ENCODE measurements at regions of chr4 and their contacts with region 1.

Region 1: GRCh38 chr4:85968945-85969819 is 390.7 kb downstream of the MAPK10 start:
- DNase-seq: peak; percentile 36
- H3K4me3 ChIP-seq: no peak overlapping the region
- H3K27ac ChIP-seq: no peak overlapping the region
- H3K4me1 ChIP-seq: no peaks in the 10 kb centered on the region
- H3K27me3 ChIP-seq: no peaks in the 10 kb centered on the region
- CTCF ChIP-seq: peak; percentile 31 to 66

Region 2: GRCh38 chr4:84938316-84938715 is 1030.9 kb before region 1 on chr4:
- CTCF ChIA-PET with region 1: no interaction called
- dilution Hi-C with region 1: no loop called
- in situ Hi-C with region 1: no loop called
- intact Hi-C with region 1: no loop called
- DNase-seq: peak; percentile 33
- H3K4me3 ChIP-seq: peak overlapping the region in 1 of 3 experiments; percentile 4
- H3K27ac ChIP-seq: peak overlapping the region; percentile 67
- H3K4me1 ChIP-seq: peaks cover 13% of the 10 kb centered on the region
- H3K27me3 ChIP-seq: no peaks in the 10 kb centered on the region
- CTCF ChIP-seq: no peak

Region 3: GRCh38 chr4:85084380-85085094 is 884.6 kb before region 1 on chr4:
- CTCF ChIA-PET with region 1: no interaction called
- dilution Hi-C with region 1: no loop called
- in situ Hi-C with region 1: no loop called
- intact Hi-C with region 1: loop called (anchors 10 kb)
- DNase-seq: peak; percentile 56
- H3K4me3 ChIP-seq: no peak overlapping the region
- H3K27ac ChIP-seq: no peak overlapping the region
- H3K4me1 ChIP-seq: no peaks in the 10 kb centered on the region
- H3K27me3 ChIP-seq: peaks cover 5% of the 10 kb centered on the region
- CTCF ChIP-seq: peak; percentile 59 to 73

Region 4: GRCh38 chr4:85147439-85148076 is 821.6 kb before region 1 on chr4:
- CTCF ChIA-PET with region 1: no interaction called
- dilution Hi-C with region 1: no loop called
- in situ Hi-C with region 1: no loop called
- intact Hi-C with region 1: loop called (anchors 10 kb)
- DNase-seq: peak; percentile 41
- H3K4me3 ChIP-seq: no peak overlapping the region
- H3K27ac ChIP-seq: no peak overlapping the region
- H3K4me1 ChIP-seq: peaks cover 3% of the 10 kb centered on the region
- H3K27me3 ChIP-seq: no peaks in the 10 kb centered on the region
- CTCF ChIP-seq: peak; percentile 47 to 61

Region 5: GRCh38 chr4:85257817-85258370 is 711.3 kb before region 1 on chr4:
- CTCF ChIA-PET with region 1: no interaction called
- dilution Hi-C with region 1: no loop called
- in situ Hi-C with region 1: no loop called
- intact Hi-C with region 1: no loop called
- DNase-seq: no peak
- H3K4me3 ChIP-seq: no peak overlapping the region
- H3K27ac ChIP-seq: no peak overlapping the region
- H3K4me1 ChIP-seq: no peaks in the 10 kb centered on the region
- H3K27me3 ChIP-seq: peaks cover 3% of the 10 kb centered on the region
- CTCF ChIP-seq: no peak

Region 6: GRCh38 chr4:85756938-85757337 is 212.2 kb before region 1 on chr4:
- CTCF ChIA-PET with region 1: no interaction called
- dilution Hi-C with region 1: no loop called
- in situ Hi-C with region 1: loop called (anchors 25 kb)
- intact Hi-C with region 1: loop called (anchors 1 kb)
- DNase-seq: no peak
- H3K4me3 ChIP-seq: no peak overlapping the region
- H3K27ac ChIP-seq: no peak overlapping the region
- H3K4me1 ChIP-seq: no peaks in the 10 kb centered on the region
- H3K27me3 ChIP-seq: no peaks in the 10 kb centered on the region
- CTCF ChIP-seq: peak; percentile 40 to 58

Region 7: GRCh38 chr4:85787138-85787537 is 182.0 kb before region 1 on chr4:
- CTCF ChIA-PET with region 1: no interaction called
- dilution Hi-C with region 1: no loop called
- in situ Hi-C with region 1: no loop called
- intact Hi-C with region 1: no loop called
- DNase-seq: peak; percentile 60
- H3K4me3 ChIP-seq: no peak overlapping the region
- H3K27ac ChIP-seq: no peak overlapping the region
- H3K4me1 ChIP-seq: peaks cover 6% of the 10 kb centered on the region
- H3K27me3 ChIP-seq: no peaks in the 10 kb centered on the region
- CTCF ChIP-seq: no peak

Region 8: DNA sequence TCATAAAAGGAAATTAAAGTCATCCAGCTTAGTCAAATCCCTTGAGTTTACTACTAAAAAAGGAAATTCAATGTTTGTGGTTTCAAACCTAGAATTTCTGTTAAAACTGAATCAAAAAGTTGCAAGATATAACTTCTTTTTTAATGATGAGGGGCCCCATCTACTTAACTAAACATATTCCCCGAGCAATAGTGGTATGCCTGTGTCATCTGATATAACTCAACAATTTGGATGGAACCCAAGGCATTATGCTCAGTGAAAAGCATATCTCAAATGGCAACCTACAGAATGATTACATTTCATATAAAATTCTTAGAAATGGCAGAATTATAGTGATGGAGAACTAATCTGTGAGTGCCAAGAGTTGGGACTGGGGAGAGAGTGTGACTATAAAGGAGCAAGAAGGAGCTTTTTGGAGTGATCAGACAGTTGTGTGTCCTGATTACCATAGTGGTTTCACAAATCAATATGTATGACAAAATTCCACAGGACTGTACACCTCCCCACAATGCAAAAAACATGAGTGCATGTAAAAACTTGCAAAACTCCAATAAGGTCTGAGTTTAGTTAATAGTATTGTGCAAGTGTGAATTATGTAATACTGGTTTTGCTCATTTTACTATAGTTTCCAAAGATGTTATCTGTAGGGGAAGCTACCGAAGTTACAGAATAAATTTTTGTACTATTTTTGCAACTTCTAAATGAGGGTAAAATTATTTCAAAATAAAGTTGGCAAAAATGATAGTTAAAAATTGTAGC is 171.0 kb before region 1 on chr4:
- CTCF ChIA-PET with region 1: interaction called, 5 read pairs
- dilution Hi-C with region 1: no loop called
- in situ Hi-C with region 1: no loop called
- intact Hi-C with region 1: loop called (anchors 1 kb)
- DNase-seq: peak; percentile 53
- H3K4me3 ChIP-seq: no peak overlapping the region
- H3K27ac ChIP-seq: no peak overlapping the region
- H3K4me1 ChIP-seq: peaks cover 6% of the 10 kb centered on the region
- H3K27me3 ChIP-seq: no peaks in the 10 kb centered on the region
- CTCF ChIP-seq: no peak

Region 9: DNA sequence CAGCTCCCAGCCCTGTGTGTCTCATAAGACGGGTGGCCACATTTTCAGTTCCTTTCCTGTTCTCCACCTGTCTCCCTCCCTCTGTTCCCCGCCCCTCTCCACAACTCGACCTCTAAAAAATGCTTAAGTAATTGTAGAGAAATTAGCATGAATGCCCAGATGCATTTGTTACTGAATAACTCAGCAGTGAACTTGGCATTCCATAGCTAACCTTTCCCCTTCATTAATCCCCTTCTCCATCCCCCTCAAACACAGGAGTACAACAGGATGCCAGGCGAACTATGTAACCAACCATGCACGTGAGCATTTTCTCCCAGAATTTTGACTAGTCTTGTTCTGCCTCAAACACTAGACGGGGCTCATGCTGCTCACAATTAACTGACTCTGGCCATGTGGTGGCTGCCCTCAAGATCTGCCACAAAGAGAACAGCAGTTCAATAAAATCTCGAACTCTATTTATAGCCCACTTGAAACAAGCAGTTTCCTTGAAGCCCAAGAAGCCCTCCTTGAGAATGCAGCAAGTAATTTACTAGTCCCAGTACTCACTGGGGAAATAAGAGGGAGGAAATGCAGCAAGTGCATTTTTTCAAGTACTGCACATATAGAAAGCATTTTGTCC is 143.0 kb before region 1 on chr4:
- CTCF ChIA-PET with region 1: interaction called, 3 read pairs
- dilution Hi-C with region 1: no loop called
- in situ Hi-C with region 1: no loop called
- intact Hi-C with region 1: loop called (anchors 10 kb)
- DNase-seq: no peak
- H3K4me3 ChIP-seq: no peak overlapping the region
- H3K27ac ChIP-seq: no peak overlapping the region
- H3K4me1 ChIP-seq: peaks cover 12% of the 10 kb centered on the region
- H3K27me3 ChIP-seq: peaks cover 2% of the 10 kb centered on the region
- CTCF ChIP-seq: no peak

Region 10: DNA sequence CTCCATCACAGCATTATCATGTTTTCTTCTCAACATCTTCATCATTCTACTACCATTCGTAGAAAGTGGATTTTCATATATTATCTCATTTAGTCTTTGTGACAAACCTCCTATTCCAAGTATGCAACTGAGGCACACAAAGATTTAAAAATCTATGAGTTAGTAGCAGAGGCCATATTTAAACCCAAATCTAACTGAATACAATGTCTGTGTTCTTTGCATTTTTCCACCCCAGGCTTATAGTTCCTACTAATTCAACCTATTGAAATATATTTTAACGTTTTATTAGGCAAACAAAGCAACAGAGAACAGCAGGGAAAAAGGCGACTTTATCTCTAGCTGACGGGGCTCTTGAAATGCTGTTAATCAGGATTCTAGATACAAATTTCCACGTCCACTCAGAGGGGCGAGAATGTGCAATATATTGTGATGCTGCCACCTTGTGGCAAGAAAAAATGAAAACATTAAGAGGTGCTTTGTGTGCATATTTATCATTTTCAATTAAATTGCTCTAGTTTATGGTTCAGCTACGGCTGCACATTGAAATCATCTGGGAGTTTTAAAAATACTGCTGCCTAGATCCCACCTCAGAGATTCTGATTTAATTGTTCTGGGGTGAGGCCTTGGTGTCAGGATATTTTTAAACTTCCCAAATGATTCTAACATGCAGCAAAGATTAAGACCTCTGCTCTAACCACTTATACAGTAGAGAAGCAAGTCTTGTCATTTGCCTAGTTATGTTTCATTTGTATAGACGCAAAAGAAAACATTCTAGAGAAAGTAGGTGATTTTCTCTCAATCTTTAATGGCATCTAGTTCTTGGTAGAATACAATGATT is 74.8 kb after region 1 on chr4:
- CTCF ChIA-PET with region 1: no interaction called
- dilution Hi-C with region 1: no loop called
- in situ Hi-C with region 1: no loop called
- intact Hi-C with region 1: loop called (anchors 1 kb)
- DNase-seq: peak; percentile 29
- H3K4me3 ChIP-seq: no peak overlapping the region
- H3K27ac ChIP-seq: no peak overlapping the region
- H3K4me1 ChIP-seq: peaks cover 3% of the 10 kb centered on the region
- H3K27me3 ChIP-seq: no peaks in the 10 kb centered on the region
- CTCF ChIP-seq: peak; percentile 48 to 58

Region 11: DNA sequence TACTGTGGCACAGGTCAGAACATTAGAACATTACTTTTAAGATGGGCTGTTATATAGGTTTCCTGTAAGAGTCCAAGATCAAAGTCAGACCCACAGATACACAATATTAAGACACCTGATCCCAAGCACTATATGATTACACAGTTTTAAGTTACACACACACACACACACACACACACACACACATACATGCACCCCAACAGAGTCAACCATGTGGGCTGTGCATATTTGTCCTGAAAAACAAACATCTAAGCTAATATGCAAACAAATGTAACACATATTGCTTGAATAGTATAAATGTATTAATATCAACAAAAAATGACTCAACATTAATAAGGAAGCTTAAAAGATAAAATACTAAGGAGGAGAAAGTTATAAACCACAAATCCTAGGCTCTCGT is 341.7 kb after region 1 on chr4:
- CTCF ChIA-PET with region 1: no interaction called
- dilution Hi-C with region 1: no loop called
- in situ Hi-C with region 1: no loop called
- intact Hi-C with region 1: no loop called
- DNase-seq: no peak
- H3K4me3 ChIP-seq: no peak overlapping the region
- H3K27ac ChIP-seq: no peak overlapping the region
- H3K4me1 ChIP-seq: no peaks in the 10 kb centered on the region
- H3K27me3 ChIP-seq: no peaks in the 10 kb centered on the region
- CTCF ChIP-seq: no peak

Measured in mammary epithelial cell (primary cell).